Ascending aorta (tissue), 2 donors: ENCODE measurements at regions of chr11 and their contacts with region 1.

Region 1: GRCh38 chr11:117843666-117844484 is 19.3 kb upstream of the FXYD2 start:
- DNase-seq: peak in 1 of 2 donors; percentile 87
- H3K4me3 ChIP-seq: no peak overlapping the region
- H3K27ac ChIP-seq: no peak overlapping the region
- H3K4me1 ChIP-seq: no peaks in the 10 kb centered on the region
- H3K27me3 ChIP-seq: no peaks in the 10 kb centered on the region
- CTCF ChIP-seq: peak; percentile 82 to 94 (median 94)

Region 2: DNA sequence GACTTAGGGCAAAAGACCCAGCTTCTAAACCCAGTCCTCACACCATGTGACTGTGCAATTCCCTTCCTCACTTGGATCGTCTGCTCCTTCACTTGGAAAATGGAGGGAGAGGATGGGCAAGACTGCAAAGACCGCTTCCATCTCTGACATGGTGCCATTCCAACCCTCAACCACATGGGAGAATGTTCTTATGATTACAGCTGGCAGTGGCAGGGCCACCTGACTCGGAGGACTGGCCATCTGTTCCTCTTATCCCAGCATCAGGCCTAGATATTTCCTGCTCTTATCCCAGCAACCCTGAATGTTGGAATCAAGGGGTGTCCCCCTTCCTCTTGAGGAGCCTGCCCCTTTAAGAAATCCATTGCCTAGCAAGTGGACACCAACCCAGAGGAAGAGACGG is 62.2 kb before region 1 on chr11:
- intact Hi-C with region 1: no loop called
- DNase-seq: no peak
- H3K4me3 ChIP-seq: no peak overlapping the region
- H3K27ac ChIP-seq: no peak overlapping the region
- H3K4me1 ChIP-seq: no peaks in the 10 kb centered on the region
- H3K27me3 ChIP-seq: no peaks in the 10 kb centered on the region
- CTCF ChIP-seq: no peak

Region 3: GRCh38 chr11:117946842-117947526 is 103.1 kb after region 1 on chr11:
- intact Hi-C with region 1: loop called (anchors 1 kb)
- DNase-seq: peak; percentile 23 to 87
- H3K4me3 ChIP-seq: no peak overlapping the region
- H3K27ac ChIP-seq: no peak overlapping the region
- H3K4me1 ChIP-seq: no peaks in the 10 kb centered on the region
- H3K27me3 ChIP-seq: no peaks in the 10 kb centered on the region
- CTCF ChIP-seq: peak; percentile 65 to 81 (median 79)

Region 4: DNA sequence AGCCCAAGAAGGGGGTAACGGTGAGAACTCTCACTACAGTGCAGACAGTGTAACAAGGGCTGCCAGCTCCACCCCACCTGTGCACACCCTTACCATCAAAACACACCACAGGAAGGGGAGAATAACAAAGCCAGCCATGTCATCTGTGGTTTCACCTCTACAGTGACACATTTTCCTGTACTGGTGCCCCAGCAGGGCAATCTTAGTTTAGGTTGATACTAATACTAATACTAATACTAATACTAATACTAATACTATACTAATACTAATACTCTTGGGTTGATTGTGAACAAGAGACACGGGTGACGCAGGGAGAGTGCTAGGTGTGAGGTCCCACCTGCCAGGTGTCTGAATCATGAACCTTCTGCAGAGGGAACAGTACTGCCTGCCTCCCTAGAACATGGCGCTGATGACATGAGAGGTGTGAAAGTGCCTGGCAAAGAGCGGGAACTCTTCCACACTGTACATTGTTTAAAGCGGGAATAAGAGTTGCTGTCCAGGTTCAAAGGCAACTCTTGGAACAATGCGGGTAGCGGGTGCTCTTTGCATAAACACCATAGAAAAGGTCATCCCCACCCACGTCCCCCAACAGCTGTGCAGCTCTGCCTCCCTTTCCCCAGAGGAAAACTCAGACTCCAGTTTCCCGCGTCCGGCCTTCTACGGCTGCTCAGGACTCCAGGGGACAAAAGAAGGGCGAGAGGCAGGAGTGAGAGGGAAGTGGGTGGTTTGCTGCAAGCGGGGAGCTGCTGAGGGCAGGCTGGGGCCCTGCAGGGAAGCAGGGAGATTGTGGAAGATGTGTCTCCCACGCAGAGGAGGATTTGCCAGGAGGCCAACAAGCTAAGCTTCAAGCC is 208.0 kb after region 1 on chr11:
- intact Hi-C with region 1: loop called (anchors 2 kb)
- DNase-seq: peak in 1 of 2 donors; percentile 53
- H3K4me3 ChIP-seq: no peak overlapping the region
- H3K27ac ChIP-seq: no peak overlapping the region
- H3K4me1 ChIP-seq: no peaks in the 10 kb centered on the region
- H3K27me3 ChIP-seq: no peaks in the 10 kb centered on the region
- CTCF ChIP-seq: no peak